PC-9 (cell line): ENCODE measurements at regions of chr4 and their contacts with region 1.

Region 1: GRCh38 chr4:41360214-41360920 is 103.6 kb downstream of the UCHL1 start:
- DNase-seq: peak; percentile 56 to 78
- H3K4me3 ChIP-seq: peak overlapping the region; percentile 91
- H3K27ac ChIP-seq: peak overlapping the region; percentile 71
- H3K4me1 ChIP-seq: peaks cover 34% of the 10 kb centered on the region
- H3K27me3 ChIP-seq: no peaks in the 10 kb centered on the region
- CTCF ChIP-seq: no peak

Region 2: DNA sequence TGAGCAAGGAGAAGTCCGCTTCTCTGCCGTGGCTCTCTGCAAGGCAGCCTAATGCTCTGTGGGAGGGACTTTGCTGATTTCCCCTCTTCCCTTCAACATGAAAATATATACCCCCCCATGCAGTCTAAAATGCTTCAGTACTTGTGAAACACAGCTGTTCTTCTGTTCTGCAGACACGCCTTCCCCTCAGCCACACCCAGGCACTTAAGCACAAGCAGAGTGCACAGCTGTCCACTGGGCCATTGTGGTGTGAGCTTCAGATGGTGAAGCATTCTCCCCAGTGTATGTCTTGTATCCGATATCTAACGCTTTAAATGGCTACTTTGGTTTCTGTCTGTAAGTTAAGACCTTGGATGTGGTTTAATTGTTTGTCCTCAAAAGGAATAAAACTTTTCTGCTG is 92.3 kb before region 1 on chr4:
- CTCF ChIA-PET with region 1: no interaction called
- POLR2A ChIA-PET with region 1: no interaction called
- intact Hi-C with region 1: no loop called
- DNase-seq: no peak
- H3K4me3 ChIP-seq: no peak overlapping the region
- H3K27ac ChIP-seq: no peak overlapping the region
- H3K4me1 ChIP-seq: no peaks in the 10 kb centered on the region
- H3K27me3 ChIP-seq: no peaks in the 10 kb centered on the region
- CTCF ChIP-seq: no peak

Region 3: DNA sequence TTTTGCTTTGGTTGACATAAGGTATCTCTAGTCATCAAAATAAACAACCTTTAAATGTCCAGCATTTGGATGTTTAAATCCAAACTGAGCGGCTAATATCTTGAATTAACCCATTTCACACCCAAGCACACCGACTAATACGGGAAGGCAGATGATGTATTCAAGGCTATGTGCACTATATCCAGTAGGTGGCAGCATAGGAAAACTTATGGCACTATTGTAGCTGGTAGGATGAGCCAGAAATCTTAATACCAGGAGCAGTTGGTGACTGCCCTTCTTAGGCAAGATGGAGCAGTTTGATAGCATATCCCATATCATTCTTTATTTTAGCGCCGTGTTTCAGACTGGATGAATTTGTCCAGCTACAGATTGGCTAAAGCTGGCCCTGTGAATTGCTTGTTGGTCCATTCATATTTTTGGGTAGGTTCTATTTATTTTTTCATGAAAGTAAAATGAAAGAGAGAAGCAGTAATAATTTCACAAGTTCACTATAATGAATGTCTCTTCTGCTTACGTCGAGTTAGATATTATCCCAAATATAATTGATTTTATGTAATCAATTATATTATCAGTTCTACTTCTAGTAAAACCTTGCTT is 79.2 kb before region 1 on chr4:
- CTCF ChIA-PET with region 1: interaction called, 9 read pairs
- POLR2A ChIA-PET with region 1: interaction called, 3 read pairs
- intact Hi-C with region 1: loop called (anchors 1 kb)
- DNase-seq: peak; percentile 48 to 72
- H3K4me3 ChIP-seq: no peak overlapping the region
- H3K27ac ChIP-seq: no peak overlapping the region
- H3K4me1 ChIP-seq: peaks cover 23% of the 10 kb centered on the region
- H3K27me3 ChIP-seq: no peaks in the 10 kb centered on the region
- CTCF ChIP-seq: peak; percentile 91

Region 4: GRCh38 chr4:41318867-41319535 is 41.4 kb before region 1 on chr4:
- CTCF ChIA-PET with region 1: interaction called, 3 read pairs
- POLR2A ChIA-PET with region 1: interaction called, 9 read pairs
- intact Hi-C with region 1: loop called (anchors 1 kb)
- DNase-seq: peak; percentile 74 to 98
- H3K4me3 ChIP-seq: no peak overlapping the region; the same call in 1 of the 2 replicates
- H3K27ac ChIP-seq: peak overlapping the region; percentile 98
- H3K4me1 ChIP-seq: peaks cover 72% of the 10 kb centered on the region
- H3K27me3 ChIP-seq: no peaks in the 10 kb centered on the region
- CTCF ChIP-seq: no peak

Region 5: DNA sequence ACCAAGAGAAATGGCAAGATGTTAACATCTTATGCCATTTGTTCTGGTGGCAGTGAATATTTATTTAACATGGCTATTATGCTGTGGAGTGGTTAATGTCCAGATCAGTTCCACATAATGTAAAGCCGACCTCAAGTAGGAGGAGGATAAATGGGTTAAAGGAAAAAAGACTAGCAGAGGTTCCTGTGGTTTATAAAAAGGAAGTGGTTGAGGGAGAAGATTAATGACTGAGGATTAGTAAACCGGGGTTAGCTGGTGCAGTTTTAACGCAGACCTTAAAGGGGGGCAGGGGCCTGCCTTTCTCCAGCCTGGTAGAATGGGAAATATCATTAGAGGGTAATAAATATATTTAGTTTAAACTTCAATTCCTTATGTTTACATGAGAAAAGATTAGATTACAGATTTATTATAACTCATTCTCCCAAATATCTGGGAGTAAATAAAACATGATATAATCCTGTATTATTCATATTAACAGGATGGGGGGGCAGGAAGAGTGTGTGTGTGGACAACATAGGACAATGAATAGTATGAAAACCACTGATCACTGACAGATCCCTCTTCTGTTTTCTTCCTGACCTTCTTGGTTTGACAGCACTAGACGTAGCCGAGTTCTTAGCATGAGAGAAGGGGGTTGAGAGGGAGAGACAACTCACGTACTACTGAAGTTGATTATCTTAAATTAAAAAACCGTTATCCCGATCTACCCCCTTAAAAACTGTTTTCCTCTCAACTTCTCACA is 53.5 kb after region 1 on chr4:
- CTCF ChIA-PET with region 1: no interaction called
- POLR2A ChIA-PET with region 1: no interaction called
- intact Hi-C with region 1: no loop called
- DNase-seq: no peak
- H3K4me3 ChIP-seq: no peak overlapping the region
- H3K27ac ChIP-seq: peak overlapping the region; percentile 11; the same call in 1 of the 2 replicates
- H3K4me1 ChIP-seq: peaks cover 14% of the 10 kb centered on the region
- H3K27me3 ChIP-seq: no peaks in the 10 kb centered on the region
- CTCF ChIP-seq: no peak

Region 6: DNA sequence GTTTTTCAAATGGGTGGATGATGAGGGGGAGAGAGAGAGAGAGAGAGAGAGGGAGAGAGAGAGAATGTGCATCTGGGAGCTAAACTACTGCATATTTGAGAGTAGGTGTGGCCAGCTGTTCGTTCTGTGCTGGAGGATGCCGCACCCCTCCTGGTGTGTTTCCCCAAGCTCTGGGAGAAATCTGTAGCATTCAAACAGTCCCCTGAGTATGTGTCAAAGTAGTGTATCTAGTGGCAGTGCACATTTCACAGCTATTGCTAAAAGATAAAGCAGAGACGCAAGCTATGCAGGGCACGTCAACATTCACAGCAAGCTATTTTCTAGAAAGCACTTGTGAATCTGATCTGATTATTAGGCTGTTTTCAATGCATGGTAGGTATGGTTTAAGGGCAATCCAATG is 94.1 kb after region 1 on chr4:
- CTCF ChIA-PET with region 1: no interaction called
- POLR2A ChIA-PET with region 1: no interaction called
- intact Hi-C with region 1: loop called (anchors 5 kb)
- DNase-seq: peak in 1 of 2 experiments; percentile 24
- H3K4me3 ChIP-seq: no peak overlapping the region
- H3K27ac ChIP-seq: no peak overlapping the region
- H3K4me1 ChIP-seq: peaks cover 25% of the 10 kb centered on the region
- H3K27me3 ChIP-seq: no peaks in the 10 kb centered on the region
- CTCF ChIP-seq: no peak

Region 7: GRCh38 chr4:41525129-41525528 is 164.8 kb after region 1 on chr4:
- CTCF ChIA-PET with region 1: no interaction called
- POLR2A ChIA-PET with region 1: interaction called, 24 read pairs
- intact Hi-C with region 1: no loop called
- DNase-seq: peak; percentile 66 to 97
- H3K4me3 ChIP-seq: no peak overlapping the region
- H3K27ac ChIP-seq: peak overlapping the region; percentile 97
- H3K4me1 ChIP-seq: peaks cover 42% of the 10 kb centered on the region
- H3K27me3 ChIP-seq: no peaks in the 10 kb centered on the region
- CTCF ChIP-seq: no peak

Region 8: GRCh38 chr4:41611881-41612871 is 251.8 kb after region 1 on chr4:
- CTCF ChIA-PET with region 1: interaction called, 3 read pairs
- POLR2A ChIA-PET with region 1: interaction called, 8 read pairs
- intact Hi-C with region 1: loop called (anchors 5 kb)
- DNase-seq: peak; percentile 68 to 94
- H3K4me3 ChIP-seq: peak overlapping the region; percentile 37; the same call in 1 of the 2 replicates
- H3K27ac ChIP-seq: peak overlapping the region; percentile 82
- H3K4me1 ChIP-seq: peaks cover 43% of the 10 kb centered on the region
- H3K27me3 ChIP-seq: no peaks in the 10 kb centered on the region
- CTCF ChIP-seq: no peak

Region 9: GRCh38 chr4:41939014-41939623 is 578.8 kb after region 1 on chr4:
- CTCF ChIA-PET with region 1: no interaction called
- POLR2A ChIA-PET with region 1: no interaction called
- intact Hi-C with region 1: no loop called
- DNase-seq: peak in 1 of 2 experiments; percentile 46
- H3K4me3 ChIP-seq: no peak overlapping the region
- H3K27ac ChIP-seq: no peak overlapping the region
- H3K4me1 ChIP-seq: peaks cover 36% of the 10 kb centered on the region
- H3K27me3 ChIP-seq: no peaks in the 10 kb centered on the region
- CTCF ChIP-seq: no peak

Region 10: GRCh38 chr4:42531341-42532030 is 1171.1 kb after region 1 on chr4:
- CTCF ChIA-PET with region 1: no interaction called
- POLR2A ChIA-PET with region 1: no interaction called
- intact Hi-C with region 1: no loop called
- DNase-seq: no peak
- H3K4me3 ChIP-seq: no peak overlapping the region
- H3K27ac ChIP-seq: no peak overlapping the region
- H3K4me1 ChIP-seq: no peaks in the 10 kb centered on the region
- H3K27me3 ChIP-seq: peaks cover 10% of the 10 kb centered on the region; the same call in 1 of the 2 replicates
- CTCF ChIP-seq: no peak